ENCODE measurements at regions of chr1 and their contacts with region 1.

Region 1: DNA sequence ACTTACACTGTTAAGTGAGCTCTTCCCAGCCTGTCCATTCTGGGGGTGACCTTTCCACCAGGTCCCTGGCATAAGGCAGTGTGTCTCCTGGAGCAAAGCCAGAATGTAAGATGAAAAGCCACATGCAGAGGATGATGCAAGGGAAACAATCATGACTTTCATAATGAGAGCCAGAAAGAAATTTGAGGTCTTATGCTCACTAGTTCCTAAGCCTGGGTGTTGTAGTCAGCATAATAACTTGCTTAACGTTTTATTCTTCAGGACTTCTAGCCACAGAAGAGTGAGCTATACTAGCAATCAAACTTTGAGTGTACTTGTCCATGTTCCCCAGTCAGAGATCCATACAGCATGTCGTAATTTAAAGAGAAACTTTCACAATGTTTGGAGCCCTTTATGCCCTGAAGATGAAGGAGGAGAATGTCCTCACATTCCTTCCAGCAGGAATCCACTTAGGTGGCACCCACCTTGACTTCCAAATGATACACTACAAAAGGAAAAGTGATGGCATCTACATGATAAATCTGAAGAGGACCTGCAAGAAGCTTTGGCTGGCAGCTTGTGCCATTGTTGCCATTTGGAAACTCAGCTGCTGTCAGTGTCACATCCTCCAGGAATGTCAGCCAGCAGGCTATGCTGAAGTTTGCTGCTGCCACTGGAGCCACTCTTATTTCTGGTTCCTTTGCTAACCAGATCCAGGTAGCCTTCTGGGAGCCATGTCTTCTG is 60.5 kb upstream of the FOXD3 start:
- DNase-seq: no peak
- H3K4me3 ChIP-seq: no peak overlapping the region
- H3K27ac ChIP-seq: no peak overlapping the region
- H3K4me1 ChIP-seq: no peaks in the 10 kb centered on the region
- H3K27me3 ChIP-seq: no peaks in the 10 kb centered on the region
- CTCF ChIP-seq: no peak

Region 2: GRCh38 chr1:63203641-63204040 is 58.3 kb before region 1 on chr1:
- CTCF ChIA-PET with region 1: no interaction called
- POLR2A ChIA-PET with region 1: no interaction called
- intact Hi-C with region 1: no loop called
- DNase-seq: no peak
- H3K4me3 ChIP-seq: no peak overlapping the region
- H3K27ac ChIP-seq: no peak overlapping the region
- H3K4me1 ChIP-seq: no peaks in the 10 kb centered on the region
- H3K27me3 ChIP-seq: peaks cover 58% of the 10 kb centered on the region
- CTCF ChIP-seq: no peak

Region 3: DNA sequence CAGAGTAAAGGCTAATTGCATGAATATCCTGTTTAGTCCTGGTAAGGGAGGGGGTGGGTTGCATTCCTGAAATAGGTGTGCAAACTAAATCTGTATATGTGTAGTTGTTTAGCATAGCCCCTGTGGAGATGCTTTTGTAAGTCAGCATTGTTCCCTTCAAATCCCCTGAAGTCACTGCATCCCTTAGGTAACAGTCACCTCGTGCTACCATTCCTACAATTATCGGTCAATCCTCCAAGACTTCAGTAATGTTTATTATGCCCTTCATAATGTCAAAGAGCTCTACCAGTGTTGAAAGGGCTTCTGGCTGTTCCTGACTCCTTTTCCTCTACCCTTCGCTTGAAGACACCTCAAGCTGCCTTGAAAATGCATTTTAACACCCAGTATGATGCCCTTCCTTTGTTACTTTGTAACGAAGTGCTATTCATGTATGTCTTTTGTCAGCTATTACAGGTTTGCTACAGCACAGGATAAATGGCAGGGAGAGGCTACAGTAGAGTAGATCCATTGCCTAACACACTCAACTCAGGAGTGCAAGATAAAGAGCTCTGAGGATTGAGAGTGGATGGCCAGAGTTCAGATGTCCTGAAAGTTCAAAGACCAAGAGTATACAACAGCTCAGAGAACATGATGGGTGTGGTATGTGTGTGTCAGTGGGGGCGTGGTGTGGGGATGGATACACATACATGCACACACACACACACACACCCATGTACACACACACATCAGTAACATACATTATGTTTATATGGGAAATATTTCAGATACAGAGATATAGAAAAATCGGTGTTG is 33.1 kb after region 1 on chr1:
- CTCF ChIA-PET with region 1: no interaction called
- POLR2A ChIA-PET with region 1: interaction called, 10 read pairs
- intact Hi-C with region 1: no loop called
- DNase-seq: no peak
- H3K4me3 ChIP-seq: no peak overlapping the region
- H3K27ac ChIP-seq: no peak overlapping the region
- H3K4me1 ChIP-seq: no peaks in the 10 kb centered on the region
- H3K27me3 ChIP-seq: peaks cover 32% of the 10 kb centered on the region
- CTCF ChIP-seq: no peak

Measured in PC-9 (cell line).